Right ventricle myocardium inferior (tissue), 1 donor: ENCODE measurements at regions of chr2 and their contacts with region 1.

Region 1: DNA sequence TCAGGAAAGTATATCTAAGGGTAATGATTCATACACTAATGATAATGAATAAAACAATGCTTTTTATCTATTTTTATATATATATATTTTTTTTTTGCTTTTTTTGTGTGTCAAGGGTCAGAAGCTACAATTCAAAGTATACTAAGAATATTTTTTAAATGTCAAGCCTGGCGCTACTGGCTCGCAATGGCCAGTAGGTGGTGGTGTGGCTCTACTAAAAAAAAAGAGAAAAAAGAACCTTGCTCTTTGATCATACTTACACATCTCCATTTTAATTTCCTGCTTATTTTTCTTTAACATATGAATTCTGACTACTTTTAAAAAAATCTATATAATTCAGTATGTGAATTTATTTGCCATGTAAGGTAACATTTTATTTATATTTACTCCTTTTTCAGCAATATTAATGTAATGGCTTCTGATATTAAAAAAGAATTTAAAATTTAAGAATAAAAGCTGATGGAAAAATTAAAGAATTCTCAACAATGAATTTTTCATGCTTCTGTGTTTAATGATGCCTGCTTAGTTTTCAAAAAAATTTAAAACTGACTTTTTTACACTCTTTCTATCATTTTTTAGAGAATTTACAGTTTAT is 232.9 kb downstream of the GULP1 start:
- DNase-seq: no peak
- ATAC-seq: no peak

Region 2: DNA sequence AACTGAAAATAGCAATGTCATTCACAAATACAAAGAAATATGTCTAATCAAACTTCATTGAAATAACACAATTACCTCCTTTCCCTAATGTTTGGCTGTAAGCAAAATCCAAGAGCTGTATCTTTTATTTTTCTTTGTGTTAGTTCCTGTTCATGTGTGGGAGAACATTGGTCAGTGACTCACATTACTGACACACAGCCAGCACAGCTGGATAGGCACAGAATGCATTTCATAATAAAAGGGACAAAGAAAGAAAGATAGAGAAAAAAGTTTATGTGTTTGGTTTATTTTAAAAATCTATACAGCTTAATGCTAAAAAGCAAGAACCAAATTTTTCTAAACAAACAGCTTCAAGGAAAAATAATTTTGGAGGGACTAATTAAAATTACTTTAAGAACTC is 264.0 kb after region 1 on chr2:
- intact Hi-C with region 1: loop called (anchors 10 kb)
- DNase-seq: peak; percentile 64
- ATAC-seq: peak; percentile 72

Region 3: DNA sequence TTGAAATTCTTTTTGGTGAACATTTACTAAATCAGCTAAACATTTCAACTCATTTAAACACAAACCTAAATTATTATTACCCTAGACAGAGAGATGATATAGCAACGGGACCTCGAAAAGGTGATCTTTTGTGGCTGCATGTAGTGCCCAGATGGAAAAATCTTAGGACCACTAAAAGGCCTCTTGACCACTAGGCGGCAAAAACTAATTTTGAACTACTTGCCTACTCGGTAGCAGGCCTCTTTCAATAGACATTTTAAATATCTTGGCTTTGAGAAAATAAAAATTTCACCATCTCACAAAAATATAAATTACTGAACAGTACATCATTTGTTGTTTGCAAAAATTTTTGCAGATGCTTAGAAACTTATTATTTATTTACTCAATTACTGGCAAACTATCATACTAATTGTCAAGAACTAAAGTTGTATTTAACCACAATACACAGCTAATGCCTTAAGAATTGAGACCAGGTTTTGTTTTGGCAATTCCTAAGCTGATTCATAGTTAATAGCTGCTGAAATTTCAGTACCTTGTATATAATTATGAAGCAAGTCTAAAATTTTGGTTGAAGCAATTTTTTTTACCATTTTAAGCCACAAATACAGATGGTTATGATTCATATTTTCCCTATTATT is 458.9 kb after region 1 on chr2:
- intact Hi-C with region 1: loop called (anchors 2 kb)
- DNase-seq: no peak
- ATAC-seq: no peak

Region 4: GRCh38 chr2:189150033-189150432 is 625.4 kb after region 1 on chr2:
- intact Hi-C with region 1: loop called (anchors 5 kb)
- DNase-seq: no peak
- ATAC-seq: no peak

Region 5: DNA sequence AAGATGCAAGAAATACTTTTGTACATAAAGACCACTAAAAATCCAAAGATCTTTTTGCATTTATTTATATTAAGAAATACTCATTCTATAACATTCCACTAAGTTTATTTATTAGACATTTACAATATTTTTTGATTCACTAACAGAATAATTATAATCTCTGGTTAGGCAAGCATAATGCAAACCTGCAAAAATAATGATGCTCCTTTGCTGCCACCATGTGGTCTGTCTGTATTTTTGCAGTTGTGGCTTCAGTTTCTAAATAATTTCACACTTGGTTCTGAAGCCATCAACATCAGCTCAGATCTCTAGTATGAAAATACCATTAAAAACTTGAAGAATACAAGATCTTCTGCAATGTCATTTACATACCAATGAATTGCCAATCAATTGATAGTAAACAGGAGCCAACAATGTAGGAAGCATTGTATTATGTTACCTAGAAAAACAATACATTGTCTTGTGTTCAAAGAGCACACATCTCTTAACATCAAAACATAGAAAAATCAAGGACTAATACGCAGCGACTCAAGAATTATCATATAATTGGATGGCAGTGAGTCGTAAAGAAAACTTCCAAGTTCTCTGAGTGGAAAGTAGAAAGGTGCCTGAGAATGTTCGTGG is 887.8 kb after region 1 on chr2:
- intact Hi-C with region 1: loop called (anchors 5 kb)
- DNase-seq: no peak
- ATAC-seq: peak; percentile 64